Panc1 (cell line): ENCODE measurements at regions of chr3 and their contacts with region 1.

Region 1: DNA sequence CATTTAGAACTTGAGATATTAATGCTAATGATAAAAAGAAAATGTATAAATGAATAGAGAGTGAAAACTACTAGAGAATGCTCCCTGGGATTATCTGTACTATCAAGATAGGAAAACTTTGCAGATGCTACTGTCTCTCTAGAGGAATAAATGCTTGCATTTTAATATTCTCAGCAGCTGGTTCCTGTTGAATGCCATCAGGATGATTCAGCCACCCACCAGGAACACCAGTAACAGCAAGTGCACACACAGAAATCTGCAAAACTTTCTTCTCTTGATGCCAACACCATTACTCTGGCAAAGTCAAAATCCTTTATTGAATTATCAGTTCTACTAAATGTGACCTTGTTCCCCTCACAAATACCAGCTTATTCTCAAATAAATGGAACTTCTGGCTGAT is 148.4 kb downstream of the TIGIT start:
- DNase-seq: no peak
- ATAC-seq: no peak
- H3K4me3 ChIP-seq: no peak overlapping the region
- H3K27ac ChIP-seq: no peak overlapping the region
- H3K4me1 ChIP-seq: no peaks in the 10 kb centered on the region
- H3K27me3 ChIP-seq: no peaks in the 10 kb centered on the region
- CTCF ChIP-seq: no peak

Region 2: DNA sequence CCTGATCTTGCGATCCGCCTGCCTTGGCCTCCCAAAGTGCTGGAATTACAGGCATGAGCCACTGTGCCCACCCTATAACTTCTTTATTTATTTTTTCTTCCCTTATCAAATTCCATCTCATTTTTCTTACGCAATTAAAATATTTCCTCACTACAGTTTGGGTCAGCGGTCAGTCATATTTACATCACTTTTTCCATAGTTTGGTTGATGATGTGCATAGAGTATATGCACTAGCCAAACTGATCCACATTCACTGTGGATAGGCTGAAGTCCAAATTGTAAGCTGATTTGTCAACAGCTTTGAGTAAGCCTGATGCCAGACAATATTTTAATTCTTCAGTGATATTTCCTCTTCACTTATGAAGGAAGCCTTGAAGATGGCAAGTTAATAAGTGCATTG is 107.9 kb after region 1 on chr3:
- CTCF ChIA-PET with region 1: no interaction called
- POLR2A ChIA-PET with region 1: interaction called, 10 read pairs
- in situ Hi-C with region 1: no loop called
- intact Hi-C with region 1: no loop called
- DNase-seq: no peak
- ATAC-seq: no peak
- H3K4me3 ChIP-seq: no peak overlapping the region
- H3K27ac ChIP-seq: no peak overlapping the region
- H3K4me1 ChIP-seq: no peaks in the 10 kb centered on the region
- H3K27me3 ChIP-seq: no peaks in the 10 kb centered on the region
- CTCF ChIP-seq: no peak